GM12878 (cell line): ENCODE measurements at regions of chr6 and their contacts with region 1.

Region 1: DNA sequence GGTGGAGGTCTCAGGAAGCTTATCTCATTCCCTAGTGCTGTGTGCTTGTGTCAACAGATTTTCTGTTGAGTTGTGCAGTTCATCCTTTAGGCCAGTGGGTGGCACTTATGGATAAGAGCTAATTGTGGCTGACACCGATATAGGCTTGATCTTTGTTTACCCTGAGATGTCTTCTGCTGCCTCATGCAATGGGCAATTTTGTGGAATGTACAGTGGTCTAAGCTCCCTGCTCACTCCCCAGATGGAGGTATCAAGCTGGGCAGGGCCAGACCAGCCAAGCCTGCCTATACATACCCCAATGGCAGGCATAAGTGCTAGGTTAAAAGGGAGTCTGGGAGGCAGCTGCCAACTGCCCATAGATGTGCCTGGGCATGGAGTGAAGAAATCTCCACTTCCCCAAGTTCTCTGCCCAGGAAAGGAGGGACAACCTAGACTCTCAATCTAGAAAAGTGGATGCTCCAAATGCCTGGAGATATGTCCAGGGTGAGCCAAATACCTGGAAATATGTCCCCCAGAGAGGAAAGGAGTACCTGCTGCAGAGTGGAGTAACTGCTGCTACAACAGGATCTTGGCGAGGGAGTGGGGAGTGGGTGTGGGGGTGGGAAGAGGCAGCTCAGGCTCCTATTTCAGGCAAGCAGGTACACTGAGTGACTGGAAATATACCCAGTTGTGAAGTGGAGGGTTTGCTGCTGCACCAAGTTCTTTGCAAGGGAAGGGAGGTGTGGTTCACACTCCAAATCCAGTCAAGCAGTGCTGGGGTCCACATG is 53.2 kb upstream of the ARG1 start:
- DNase-seq: no peak
- ATAC-seq: peak; percentile 96
- H3K4me3 ChIP-seq: no peak overlapping the region
- H3K27ac ChIP-seq: no peak overlapping the region
- H3K4me1 ChIP-seq: no peaks in the 10 kb centered on the region
- H3K27me3 ChIP-seq: no peaks in the 10 kb centered on the region
- CTCF ChIP-seq: peak; percentile 56 to 70 (median 66); a peak in 5 of 6 replicates
- EP300 ChIP-seq: no peak
- POLR2A ChIP-seq: no peak
- RAD21 ChIP-seq: peak; percentile 64

Region 2: GRCh38 chr6:131199568-131200272 is 320.1 kb before region 1 on chr6:
- CTCF ChIA-PET with region 1: interaction called, 5 read pairs
- POLR2A ChIA-PET with region 1: no interaction called
- RAD21 ChIA-PET with region 1: interaction called, 6 read pairs
- SMC1A ChIA-PET with region 1: interaction called, 3 read pairs
- in situ Hi-C with region 1: no loop called
- intact Hi-C with region 1: loop called (anchors 5 kb)
- DNase-seq: peak; percentile 71
- ATAC-seq: peak; percentile 100
- H3K4me3 ChIP-seq: no peak overlapping the region
- H3K27ac ChIP-seq: peak overlapping the region; percentile 15; the same call in 1 of the 2 replicates
- H3K4me1 ChIP-seq: peaks cover 9% of the 10 kb centered on the region
- H3K27me3 ChIP-seq: no peaks in the 10 kb centered on the region
- CTCF ChIP-seq: peak; percentile 84 to 89 (median 89)
- EP300 ChIP-seq: no peak
- POLR2A ChIP-seq: no peak
- RAD21 ChIP-seq: peak; percentile 90